ENCODE measurements at regions of chr5 and their contacts with region 1.

Region 1: DNA sequence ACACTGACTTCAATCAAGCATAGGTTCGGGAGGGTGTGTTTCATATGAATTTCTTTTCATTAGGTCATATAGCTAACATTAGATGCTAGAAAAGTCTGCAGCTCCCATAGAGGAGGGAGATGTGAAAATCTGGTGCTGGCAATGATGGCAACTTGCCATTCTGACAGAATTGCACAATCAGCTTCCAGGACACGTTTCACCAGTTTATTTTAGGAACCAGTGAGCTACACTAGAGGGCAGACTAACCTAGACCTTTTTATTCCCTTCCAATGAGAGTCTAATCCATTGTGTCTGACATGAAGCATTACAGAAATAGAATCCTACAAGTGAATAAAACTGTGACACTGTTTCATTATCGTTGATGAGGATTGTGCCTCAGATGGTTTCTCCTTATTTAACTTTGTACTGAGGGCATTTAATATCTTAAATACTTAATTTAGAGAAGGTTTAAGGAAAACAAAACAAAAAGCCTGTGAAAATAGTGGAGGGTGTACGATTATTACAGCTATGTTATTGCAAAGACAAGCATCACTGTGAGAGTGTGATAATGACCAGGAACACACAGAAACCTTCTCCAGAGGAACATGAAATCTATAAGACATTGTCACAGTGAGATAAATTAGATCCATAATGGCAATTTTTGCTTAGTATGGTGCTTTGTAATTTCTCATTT is 363.3 kb upstream of the RPS23 start:
- DNase-seq: peak; percentile 86
- H3K4me3 ChIP-seq: no peak overlapping the region
- CTCF ChIP-seq: peak; percentile 61

Region 2: DNA sequence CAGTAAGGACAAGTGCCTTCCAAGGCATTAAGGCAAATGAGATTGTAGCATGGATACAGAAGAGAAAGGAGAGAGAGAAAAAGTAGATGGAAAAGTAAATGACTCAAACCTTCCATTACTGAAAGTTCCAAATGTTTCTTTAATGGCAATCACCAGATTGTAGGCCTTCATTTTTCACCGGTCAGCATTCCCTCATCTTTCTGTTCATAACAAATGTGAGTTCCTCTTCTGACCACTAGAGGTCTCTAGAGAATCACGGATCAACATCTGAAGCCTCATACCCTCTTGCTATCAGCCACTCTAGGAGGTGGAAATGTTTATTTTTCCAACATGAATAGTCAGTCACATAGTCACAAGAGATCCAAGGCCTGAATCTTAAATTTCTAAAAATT is 289.7 kb before region 1 on chr5:
- in situ Hi-C with region 1: loop called (anchors 25 kb)
- DNase-seq: peak; percentile 64
- H3K4me3 ChIP-seq: no peak overlapping the region
- CTCF ChIP-seq: peak; percentile 68

Measured in astrocyte of the cerebellum (primary cell).